H1 (cell line): ENCODE measurements at regions of chrX and their contacts with region 1.

Region 1: GRCh38 chrX:93439464-93439863 is 233.9 kb downstream of the NAP1L3 start:
- DNase-seq: no peak
- H3K4me3 ChIP-seq: no peak overlapping the region
- H3K27ac ChIP-seq: no peak overlapping the region
- H3K4me1 ChIP-seq: no peaks in the 10 kb centered on the region
- H3K27me3 ChIP-seq: no peaks in the 10 kb centered on the region
- CTCF ChIP-seq: no peak
- EP300 ChIP-seq: no peak
- POLR2A ChIP-seq: no peak
- RAD21 ChIP-seq: peak in 1 of 2 experiments; percentile 12; a peak in 2 of 4 replicates

Region 2: GRCh38 chrX:93422693-93423092 is 16.8 kb before region 1 on chrX:
- CTCF ChIA-PET with region 1: interaction called, 19 read pairs
- POLR2A ChIA-PET with region 1: interaction called, 3 read pairs
- DNase-seq: peak in 1 of 2 experiments; percentile 10
- H3K4me3 ChIP-seq: no peak overlapping the region
- H3K27ac ChIP-seq: no peak overlapping the region
- H3K4me1 ChIP-seq: no peaks in the 10 kb centered on the region
- H3K27me3 ChIP-seq: no peaks in the 10 kb centered on the region
- CTCF ChIP-seq: peak in 2 of 3 experiments; percentile 59 to 60; a peak in 3 of 4 replicates
- EP300 ChIP-seq: no peak
- POLR2A ChIP-seq: no peak
- RAD21 ChIP-seq: peak; percentile 71 to 78

Region 3: DNA sequence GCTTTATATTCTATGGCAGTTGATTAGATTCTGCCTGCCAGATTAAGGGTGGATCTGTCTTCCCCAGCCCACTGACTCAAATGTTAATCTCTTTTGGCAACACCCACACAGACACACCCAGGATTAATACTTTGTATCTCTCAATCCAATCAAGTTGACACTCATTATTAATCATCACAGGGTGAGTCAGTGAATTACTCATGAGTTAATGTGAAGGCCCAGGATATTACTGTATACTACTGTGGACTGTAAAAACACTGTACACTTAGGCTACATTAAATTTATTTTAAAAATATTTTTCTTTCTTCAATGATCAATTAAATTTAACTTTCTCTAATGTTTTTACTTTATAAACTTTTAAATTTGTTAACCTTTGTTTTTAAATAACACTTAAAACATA is 146.2 kb after region 1 on chrX:
- CTCF ChIA-PET with region 1: no interaction called
- POLR2A ChIA-PET with region 1: no interaction called
- DNase-seq: no peak
- H3K4me3 ChIP-seq: no peak overlapping the region
- H3K27ac ChIP-seq: no peak overlapping the region
- H3K4me1 ChIP-seq: no peaks in the 10 kb centered on the region
- H3K27me3 ChIP-seq: no peaks in the 10 kb centered on the region
- CTCF ChIP-seq: no peak
- EP300 ChIP-seq: no peak
- POLR2A ChIP-seq: no peak
- RAD21 ChIP-seq: no peak